Activated T-helper 1 cell treated with anti-CD3 and anti-CD28 coated beads, Interleukin-12 subunit alpha, Interleukin-12 subunit beta, Interleukin-2, Interleukin-4 antibody, amounts not matched to agents 30 ng/mL and 10 ng/mL and 1 ng/mL, durations not matched to agents 14 hours and 24 hours and 36 hours (primary cell): ENCODE measurements at regions of chr2 and their contacts with region 1.

Region 1: GRCh38 chr2:136527560-136527959 is 237.8 kb upstream of the THSD7B start:
- DNase-seq: no peak
- H3K4me3 Mint-ChIP-seq: no peak overlapping the region
- H3K27ac Mint-ChIP-seq: no peak overlapping the region
- H3K4me1 Mint-ChIP-seq: no peaks in the 10 kb centered on the region
- H3K27me3 Mint-ChIP-seq: no peaks in the 10 kb centered on the region

Region 2: GRCh38 chr2:136375017-136375901 is 152.3 kb before region 1 on chr2:
- intact Hi-C with region 1: no loop called
- DNase-seq: no peak
- H3K4me3 Mint-ChIP-seq: peak overlapping the region; percentile 59
- H3K27ac Mint-ChIP-seq: peak overlapping the region; percentile 95
- H3K4me1 Mint-ChIP-seq: peaks cover 51% of the 10 kb centered on the region
- H3K27me3 Mint-ChIP-seq: peaks cover 2% of the 10 kb centered on the region

Region 3: DNA sequence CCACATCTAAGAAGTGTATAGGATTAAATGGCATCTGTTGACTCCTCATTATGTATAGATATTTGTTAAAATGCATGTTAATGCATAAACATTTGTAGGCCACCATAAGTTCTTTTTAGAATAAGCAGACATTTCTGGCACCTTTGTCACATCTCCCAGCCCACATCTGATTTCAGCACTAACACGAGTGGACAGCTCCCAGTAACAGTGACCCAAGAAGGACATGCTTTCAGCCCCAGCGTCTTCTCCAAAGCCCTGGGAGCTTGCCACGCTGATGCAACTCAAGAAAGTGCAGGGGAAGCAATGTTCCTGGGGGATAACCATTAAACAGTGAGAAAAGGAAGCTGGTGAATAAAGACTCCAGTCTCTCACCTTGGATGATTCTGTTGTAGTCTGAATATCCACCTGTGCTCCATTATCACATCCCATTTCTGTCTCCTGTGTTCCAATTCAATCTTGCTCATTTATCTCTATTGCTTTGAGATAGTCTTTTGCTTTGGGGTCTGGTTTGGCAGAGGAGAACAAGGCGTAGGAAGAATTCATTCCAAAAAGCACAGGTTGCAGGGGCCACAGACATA is 55.2 kb after region 1 on chr2:
- intact Hi-C with region 1: loop called (anchors 1 kb)
- DNase-seq: peak; percentile 1
- H3K4me3 Mint-ChIP-seq: no peak overlapping the region
- H3K27ac Mint-ChIP-seq: no peak overlapping the region
- H3K4me1 Mint-ChIP-seq: no peaks in the 10 kb centered on the region
- H3K27me3 Mint-ChIP-seq: no peaks in the 10 kb centered on the region